WTC11 (cell line): ENCODE measurements at regions of chr2 and their contacts with region 1.

Region 1: DNA sequence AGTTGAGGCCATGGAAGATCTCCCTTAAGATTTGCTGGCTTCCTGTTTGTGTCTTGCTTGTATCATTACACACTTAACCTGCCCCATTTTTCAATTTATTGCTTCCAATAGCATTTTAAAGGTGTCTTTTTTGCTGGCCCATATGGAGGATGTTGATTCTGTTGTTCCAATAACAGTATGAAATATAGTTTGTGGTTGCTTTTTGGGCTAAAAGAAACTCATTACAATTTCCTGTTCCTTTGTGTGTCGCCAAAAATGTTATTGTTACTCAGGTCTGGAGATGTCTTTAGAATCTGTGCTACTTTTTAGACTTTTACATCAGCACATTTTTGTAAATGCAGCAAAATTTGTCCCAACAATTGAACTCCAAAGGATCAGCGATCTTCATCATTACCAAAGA is 234.0 kb upstream of the ITGA4 start:
- DNase-seq: no peak
- ATAC-seq: no peak
- H3K4me3 Mint-ChIP-seq: no peak overlapping the region
- H3K27ac Mint-ChIP-seq: no peak overlapping the region
- H3K4me1 Mint-ChIP-seq: no peaks in the 10 kb centered on the region
- H3K27me3 Mint-ChIP-seq: no peaks in the 10 kb centered on the region
- CTCF ChIP-seq: no peak

Region 2: GRCh38 chr2:181085734-181086133 is 137.5 kb before region 1 on chr2:
- CTCF ChIA-PET with region 1: no interaction called
- POLR2A ChIA-PET with region 1: interaction called, 11 read pairs
- DNase-seq: no peak
- ATAC-seq: no peak
- H3K4me3 Mint-ChIP-seq: no peak overlapping the region
- H3K27ac Mint-ChIP-seq: no peak overlapping the region
- H3K4me1 Mint-ChIP-seq: peaks cover 4% of the 10 kb centered on the region; the same call in 1 of the 2 replicates
- H3K27me3 Mint-ChIP-seq: no peaks in the 10 kb centered on the region
- CTCF ChIP-seq: no peak

Region 3: GRCh38 chr2:181241797-181242196 is 18.6 kb after region 1 on chr2:
- CTCF ChIA-PET with region 1: no interaction called
- POLR2A ChIA-PET with region 1: no interaction called
- DNase-seq: no peak
- ATAC-seq: no peak
- H3K4me3 Mint-ChIP-seq: no peak overlapping the region
- H3K27ac Mint-ChIP-seq: no peak overlapping the region
- H3K4me1 Mint-ChIP-seq: no peaks in the 10 kb centered on the region
- H3K27me3 Mint-ChIP-seq: no peaks in the 10 kb centered on the region
- CTCF ChIP-seq: no peak